Right ventricle myocardium inferior (tissue), 1 donor: ENCODE measurements at regions of chr18 and their contacts with region 1.

Region 1: DNA sequence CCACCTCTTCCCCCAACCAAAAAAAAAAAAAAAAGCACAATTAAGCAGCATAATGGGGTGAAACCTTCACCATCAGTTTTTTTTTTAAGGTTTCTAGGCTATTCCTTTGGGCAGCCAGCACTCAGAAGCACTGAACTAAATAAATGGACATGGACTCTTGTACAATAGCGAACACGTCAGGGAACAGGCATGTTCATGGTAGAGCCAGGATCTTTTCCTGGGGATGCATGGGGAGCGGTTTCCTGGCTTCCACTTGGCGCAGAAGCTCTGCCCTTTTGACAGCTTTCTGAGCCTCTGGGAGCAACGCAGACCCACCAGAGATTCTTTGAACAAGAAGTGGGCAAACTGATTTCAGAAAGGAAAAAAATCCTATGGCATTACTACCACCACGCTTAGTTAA is 35.0 kb downstream of the ALPK2 start:
- DNase-seq: no peak
- ATAC-seq: peak; percentile 29

Region 2: DNA sequence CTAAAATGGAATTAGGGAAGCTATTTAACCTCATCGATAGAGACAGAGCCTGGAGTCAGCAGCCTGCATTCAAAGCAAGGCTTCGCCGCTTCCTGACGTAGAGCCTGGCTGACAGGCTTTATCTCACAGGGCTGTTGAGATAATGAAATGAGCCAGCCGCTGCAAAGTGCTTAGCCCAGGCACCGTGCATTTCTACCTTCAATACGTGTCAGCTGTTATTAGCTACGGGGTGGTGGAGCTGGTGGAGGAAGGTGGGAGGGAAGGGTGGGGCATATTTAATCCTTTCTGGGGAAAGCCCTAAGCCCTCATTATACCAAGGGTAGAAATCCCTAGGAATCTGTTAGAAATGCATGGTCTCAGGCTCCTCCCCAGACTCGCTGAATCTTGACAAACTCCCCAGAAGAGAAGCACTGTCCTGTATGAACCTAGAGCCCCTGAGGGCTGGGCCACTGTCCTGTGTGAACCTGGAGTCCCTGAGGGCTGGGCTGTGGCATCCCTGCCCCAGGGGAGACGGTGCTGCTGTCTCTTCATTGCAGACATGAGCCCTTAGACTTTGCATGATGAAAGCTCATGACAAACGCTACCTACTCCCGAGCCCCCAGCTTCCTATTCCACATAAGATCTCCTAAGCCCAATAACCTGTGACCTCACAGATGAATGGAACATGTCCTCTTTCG is 37.5 kb before region 1 on chr18:
- intact Hi-C with region 1: loop called (anchors 2 kb)
- DNase-seq: peak; percentile 74
- ATAC-seq: peak; percentile 93

Region 3: DNA sequence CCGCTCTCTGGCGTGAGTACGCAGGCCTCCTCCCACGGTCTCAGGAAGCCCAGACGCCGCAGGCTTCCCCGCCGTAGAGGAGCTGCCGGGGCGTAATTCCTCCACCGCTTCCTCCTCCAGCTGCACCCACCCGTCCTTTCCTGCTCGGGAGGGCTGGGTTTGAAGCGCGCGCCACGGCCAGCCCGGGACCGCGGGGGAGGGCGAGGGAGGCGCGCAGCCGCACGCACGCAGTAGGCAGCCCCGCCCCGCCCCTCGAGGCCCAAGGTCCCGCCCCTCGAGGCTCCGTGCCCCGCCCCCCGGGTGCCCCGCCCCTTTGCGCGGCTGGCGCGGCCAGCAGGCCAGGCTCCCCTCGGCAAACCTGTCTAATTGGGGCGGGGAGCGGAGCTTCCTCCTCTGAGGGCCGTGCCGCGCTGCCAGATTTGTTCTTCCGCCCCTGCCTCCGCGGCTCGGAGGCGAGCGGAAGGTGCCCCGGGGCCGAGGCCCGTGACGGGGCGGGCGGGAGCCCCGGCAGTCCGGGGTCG is 77.2 kb after region 1 on chr18 and contains the start of gene MALT1:
- intact Hi-C with region 1: loop called (anchors 2 kb)
- DNase-seq: peak; percentile 96
- ATAC-seq: peak; percentile 99
- total RNA-seq, gene MALT1: 11.8 TPM